ENCODE measurements at regions of chr6 and their contacts with region 1.

Region 1: DNA sequence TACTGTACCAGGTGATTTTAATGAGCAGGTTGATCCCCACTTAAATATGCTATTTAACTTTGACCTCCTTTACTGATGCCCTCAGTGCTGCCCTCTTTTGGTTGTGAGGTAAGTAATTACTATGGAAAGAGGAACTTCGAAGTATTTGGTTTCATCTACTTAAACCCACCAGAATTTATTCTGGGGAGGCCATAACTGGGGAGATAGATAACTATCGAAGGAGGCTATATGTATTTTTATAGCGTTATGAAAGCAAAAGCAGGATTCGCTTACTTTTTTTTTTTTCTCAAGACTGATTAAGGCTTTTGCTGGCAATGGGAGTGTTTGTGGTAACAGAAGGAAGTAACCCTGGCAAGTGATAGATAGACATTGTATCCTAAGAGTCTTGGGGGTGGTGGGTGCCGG is 168.9 kb upstream of the CENPW start:
- DNase-seq: no peak
- H3K4me3 Mint-ChIP-seq: no peak overlapping the region
- H3K27ac Mint-ChIP-seq: no peak overlapping the region
- H3K4me1 Mint-ChIP-seq: peaks cover 7% of the 10 kb centered on the region
- H3K27me3 Mint-ChIP-seq: peaks cover 5% of the 10 kb centered on the region

Region 2: DNA sequence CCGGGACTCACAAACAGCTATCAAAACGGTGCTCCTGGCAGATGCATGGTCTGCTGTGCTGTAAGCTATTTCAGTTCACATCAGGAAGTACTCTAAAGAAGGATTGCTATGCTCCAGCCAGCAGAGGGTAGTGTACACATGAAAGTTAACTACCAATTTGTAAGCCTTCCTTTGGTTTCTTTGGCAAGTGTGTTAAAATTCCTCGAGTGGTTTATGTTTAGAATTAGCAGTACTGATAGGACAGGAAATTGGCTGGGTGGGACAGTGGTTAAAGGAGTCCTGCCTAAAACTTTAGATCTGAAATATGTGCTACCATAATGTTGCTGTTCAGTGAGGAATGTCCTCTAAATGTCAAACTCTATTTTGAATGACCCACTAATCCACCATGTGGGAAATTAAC is 137.3 kb before region 1 on chr6:
- intact Hi-C with region 1: loop called (anchors 1 kb)
- DNase-seq: no peak
- H3K4me3 Mint-ChIP-seq: no peak overlapping the region
- H3K27ac Mint-ChIP-seq: no peak overlapping the region
- H3K4me1 Mint-ChIP-seq: peaks cover 7% of the 10 kb centered on the region
- H3K27me3 Mint-ChIP-seq: no peaks in the 10 kb centered on the region

Region 3: GRCh38 chr6:126919947-126920346 is 749.0 kb after region 1 on chr6:
- intact Hi-C with region 1: no loop called
- DNase-seq: no peak
- H3K4me3 Mint-ChIP-seq: no peak overlapping the region
- H3K27ac Mint-ChIP-seq: no peak overlapping the region
- H3K4me1 Mint-ChIP-seq: no peaks in the 10 kb centered on the region
- H3K27me3 Mint-ChIP-seq: no peaks in the 10 kb centered on the region